ENCODE measurements at regions of chr1 and their contacts with region 1.

Region 1: DNA sequence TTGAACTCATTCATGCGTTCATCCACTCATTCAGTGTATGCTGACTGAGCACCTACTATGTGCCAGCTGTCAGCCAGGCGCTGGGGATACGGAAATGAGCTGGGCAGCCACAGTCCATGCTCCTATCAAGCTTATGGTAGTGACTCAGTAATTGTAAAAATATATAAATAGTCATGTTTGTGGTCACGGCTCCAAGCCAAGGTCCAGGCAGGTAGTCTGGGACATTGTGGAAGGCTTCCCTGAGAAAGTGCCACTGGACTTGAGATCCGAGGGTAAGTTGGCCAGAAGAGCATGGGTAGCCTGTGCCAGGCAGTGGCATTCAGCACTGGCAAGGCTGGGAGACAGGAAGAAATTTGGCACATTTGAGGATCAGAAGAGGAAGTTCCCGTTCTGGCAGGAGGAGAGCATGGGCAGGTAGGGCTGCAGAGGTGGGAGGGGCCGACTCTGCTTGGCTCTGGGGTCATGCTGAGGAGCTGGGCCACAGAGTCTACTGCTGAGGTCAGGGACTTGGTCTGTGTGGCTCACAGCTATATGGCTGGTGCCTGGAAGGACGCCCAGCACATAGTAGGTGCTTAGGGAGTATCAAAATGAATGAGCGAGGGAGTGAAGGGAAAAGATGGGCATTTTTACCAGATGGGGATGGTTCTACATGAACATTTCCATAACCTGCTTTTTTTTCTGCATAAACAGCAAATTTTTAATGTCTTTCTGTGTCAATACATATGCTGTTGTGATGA is 6.9 kb downstream of the PTPRF start:
- DNase-seq: no peak
- H3K4me3 ChIP-seq: no peak overlapping the region
- H3K4me3 Mint-ChIP-seq: no peak overlapping the region
- H3K27ac Mint-ChIP-seq: no peak overlapping the region
- H3K4me1 ChIP-seq: peaks cover 14% of the 10 kb centered on the region
- H3K4me1 Mint-ChIP-seq: peaks cover 31% of the 10 kb centered on the region
- H3K27me3 ChIP-seq: no peaks in the 10 kb centered on the region
- H3K27me3 Mint-ChIP-seq: no peaks in the 10 kb centered on the region
- CTCF ChIP-seq: no peak

Region 2: DNA sequence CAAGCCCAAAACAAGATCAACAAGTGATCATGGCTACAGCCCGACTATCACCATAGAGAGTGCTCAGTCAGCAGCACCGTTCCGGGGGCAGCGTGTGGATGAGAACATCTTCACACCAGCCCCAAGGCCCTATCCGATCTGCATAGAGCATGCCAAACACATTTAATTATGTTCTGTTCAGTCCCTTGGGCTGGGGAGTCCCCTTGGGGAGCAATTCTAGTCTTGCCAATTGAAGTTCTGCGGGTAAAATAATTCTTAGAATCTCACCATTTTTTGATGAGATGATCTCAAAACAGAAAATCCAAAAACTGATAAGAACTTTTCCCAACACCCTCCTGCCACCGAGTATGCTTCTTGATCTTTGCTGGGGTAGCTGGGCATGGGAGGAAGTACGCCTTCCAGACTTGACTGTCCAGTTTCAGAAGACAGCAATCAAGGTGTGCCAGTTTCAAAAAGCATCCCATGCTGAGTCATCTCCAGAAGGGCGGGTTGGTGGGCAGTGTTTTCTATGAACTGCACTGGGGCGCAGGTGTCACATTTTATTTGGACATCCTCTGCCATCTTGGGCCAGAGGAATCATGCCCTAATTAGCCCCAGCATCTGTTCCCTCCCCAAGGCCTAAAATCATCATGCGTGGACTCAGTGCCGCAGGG is 27.7 kb before region 1 on chr1:
- CTCF ChIA-PET with region 1: no interaction called
- POLR2A ChIA-PET with region 1: no interaction called
- intact Hi-C with region 1: no loop called
- DNase-seq: no peak
- H3K4me3 ChIP-seq: no peak overlapping the region
- H3K4me3 Mint-ChIP-seq: no peak overlapping the region
- H3K27ac Mint-ChIP-seq: no peak overlapping the region
- H3K4me1 ChIP-seq: no peaks in the 10 kb centered on the region
- H3K4me1 Mint-ChIP-seq: no peaks in the 10 kb centered on the region
- H3K27me3 ChIP-seq: no peaks in the 10 kb centered on the region
- H3K27me3 Mint-ChIP-seq: no peaks in the 10 kb centered on the region
- CTCF ChIP-seq: no peak

Region 3: GRCh38 chr1:43522776-43523480 is 14.7 kb before region 1 on chr1:
- CTCF ChIA-PET with region 1: no interaction called
- POLR2A ChIA-PET with region 1: no interaction called
- intact Hi-C with region 1: no loop called
- DNase-seq: peak; percentile 71 to 85
- H3K4me3 ChIP-seq: no peak overlapping the region
- H3K4me3 Mint-ChIP-seq: peak overlapping the region; percentile 13
- H3K27ac Mint-ChIP-seq: peak overlapping the region; percentile 59
- H3K4me1 ChIP-seq: peaks cover 24% of the 10 kb centered on the region
- H3K4me1 Mint-ChIP-seq: peaks cover 34% of the 10 kb centered on the region
- H3K27me3 ChIP-seq: no peaks in the 10 kb centered on the region
- H3K27me3 Mint-ChIP-seq: no peaks in the 10 kb centered on the region
- CTCF ChIP-seq: no peak

Region 4: GRCh38 chr1:43549921-43550597 is 12.5 kb after region 1 on chr1:
- CTCF ChIA-PET with region 1: no interaction called
- POLR2A ChIA-PET with region 1: interaction called, 9 read pairs
- intact Hi-C with region 1: loop called (anchors 2 kb)
- DNase-seq: peak; percentile 88 to 94
- H3K4me3 ChIP-seq: peak overlapping the region; percentile 28
- H3K4me3 Mint-ChIP-seq: peak overlapping the region; percentile 60
- H3K27ac Mint-ChIP-seq: peak overlapping the region; percentile 78
- H3K4me1 ChIP-seq: peaks cover 62% of the 10 kb centered on the region
- H3K4me1 Mint-ChIP-seq: peaks cover 61% of the 10 kb centered on the region
- H3K27me3 ChIP-seq: no peaks in the 10 kb centered on the region
- H3K27me3 Mint-ChIP-seq: no peaks in the 10 kb centered on the region
- CTCF ChIP-seq: peak in 1 of 2 experiments; percentile 14

Region 5: DNA sequence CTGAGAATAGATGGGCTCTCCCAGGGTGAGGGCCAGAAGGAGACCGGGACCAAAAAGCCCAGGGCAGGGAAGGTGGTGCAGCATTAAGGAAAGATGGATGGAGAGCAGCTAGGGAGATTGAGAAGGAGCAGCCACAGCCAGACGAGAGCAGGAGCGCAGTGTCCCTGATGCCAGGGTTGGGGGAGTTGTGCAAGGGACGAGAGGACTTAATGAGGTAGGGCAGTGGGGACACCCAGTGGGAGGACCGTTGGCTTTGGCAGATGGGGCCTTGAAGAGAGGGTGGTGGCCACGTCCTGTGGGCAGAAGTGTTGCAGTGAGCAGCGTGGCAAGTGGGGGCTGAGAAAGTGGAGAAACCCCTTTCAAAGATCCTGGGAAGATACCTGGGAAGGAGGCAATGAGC is 74.4 kb after region 1 on chr1:
- CTCF ChIA-PET with region 1: no interaction called
- POLR2A ChIA-PET with region 1: no interaction called
- intact Hi-C with region 1: no loop called
- DNase-seq: no peak
- H3K4me3 ChIP-seq: no peak overlapping the region
- H3K4me3 Mint-ChIP-seq: no peak overlapping the region
- H3K27ac Mint-ChIP-seq: peak overlapping the region; percentile 4
- H3K4me1 ChIP-seq: no peaks in the 10 kb centered on the region
- H3K4me1 Mint-ChIP-seq: no peaks in the 10 kb centered on the region
- H3K27me3 ChIP-seq: no peaks in the 10 kb centered on the region
- H3K27me3 Mint-ChIP-seq: no peaks in the 10 kb centered on the region
- CTCF ChIP-seq: no peak